ENCODE measurements at regions of chr22 and their contacts with region 1.

Region 1: GRCh38 chr22:24156913-24157821 is 24.1 kb upstream of the SUSD2 start:
- DNase-seq: peak; percentile 84
- ATAC-seq: peak; percentile 84
- H3K4me3 Mint-ChIP-seq: peak overlapping the region; percentile 91
- H3K27ac Mint-ChIP-seq: peak overlapping the region; percentile 85
- H3K4me1 Mint-ChIP-seq: peaks cover 64% of the 10 kb centered on the region
- H3K27me3 Mint-ChIP-seq: no peaks in the 10 kb centered on the region
- CTCF ChIP-seq: no peak

Region 2: GRCh38 chr22:23772649-23773495 is 384.3 kb before region 1 on chr22 and contains the start of gene MMP11:
- CTCF ChIA-PET with region 1: no interaction called
- POLR2A ChIA-PET with region 1: no interaction called
- intact Hi-C with region 1: no loop called
- DNase-seq: peak; percentile 60
- ATAC-seq: peak; percentile 55
- H3K4me3 Mint-ChIP-seq: peak within 1 kb of the TSS; percentile 84
- H3K27ac Mint-ChIP-seq: peak within 1 kb of the TSS; percentile 63
- H3K4me1 Mint-ChIP-seq: peaks cover 49% of the 10 kb centered on the region
- H3K27me3 Mint-ChIP-seq: no peaks in the 10 kb centered on the region
- CTCF ChIP-seq: no peak
- total RNA-seq, gene MMP11: 3.6 TPM in 2 replicates

Region 3: DNA sequence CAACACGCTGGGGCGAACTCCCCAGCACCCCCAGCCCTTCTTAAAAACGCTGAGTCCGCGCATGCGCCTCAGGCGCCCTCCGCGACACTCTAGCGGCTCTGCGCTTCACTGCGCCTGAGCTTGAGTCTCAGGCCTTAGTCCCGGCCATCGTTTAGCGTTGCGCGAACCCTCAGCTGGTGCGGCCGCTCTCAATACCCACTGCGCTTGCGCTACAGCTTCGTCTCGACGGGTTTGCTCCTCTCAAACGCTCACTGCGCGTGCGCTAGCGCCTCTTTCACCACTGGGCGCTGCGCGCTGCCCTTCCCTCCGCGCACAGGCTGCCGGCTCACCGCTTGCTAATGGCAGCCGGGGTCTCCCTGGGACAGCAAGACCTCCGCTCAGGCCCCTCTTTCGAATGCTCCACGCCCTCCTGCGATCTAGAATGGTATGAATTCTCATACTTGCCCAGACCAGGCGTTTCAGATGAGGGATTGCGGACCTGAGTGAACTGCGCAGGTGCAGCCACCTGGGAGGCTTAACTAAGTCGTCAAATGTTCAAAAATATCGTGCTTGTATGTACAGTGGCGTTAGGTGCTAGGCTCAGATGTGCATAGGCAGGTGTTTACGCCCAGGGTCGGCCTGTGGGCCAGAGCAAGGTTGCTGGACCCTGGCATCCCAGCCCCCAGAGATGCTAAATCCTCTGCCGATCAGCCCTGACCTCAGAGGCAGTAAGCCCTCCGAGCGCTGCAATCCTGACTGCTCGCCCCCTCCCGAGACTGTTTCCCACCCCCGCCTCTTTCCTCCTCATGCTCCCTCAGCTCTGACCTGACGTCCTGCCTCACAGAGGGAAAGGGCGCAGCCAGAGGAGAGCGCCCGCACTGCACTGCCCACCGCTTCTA is 299.3 kb before region 1 on chr22 and contains the start of gene SLC2A11:
- CTCF ChIA-PET with region 1: interaction called, 8 read pairs
- POLR2A ChIA-PET with region 1: interaction called, 13 read pairs
- intact Hi-C with region 1: no loop called
- DNase-seq: peak; percentile 90
- ATAC-seq: peak; percentile 94
- H3K4me3 Mint-ChIP-seq: peak within 1 kb of the TSS; percentile 91
- H3K27ac Mint-ChIP-seq: peak within 1 kb of the TSS; percentile 94
- H3K4me1 Mint-ChIP-seq: peaks cover 22% of the 10 kb centered on the region
- H3K27me3 Mint-ChIP-seq: no peaks in the 10 kb centered on the region
- CTCF ChIP-seq: no peak
- total RNA-seq, gene SLC2A11: 24.0 and 30.2 TPM in 2 replicates

Region 4: DNA sequence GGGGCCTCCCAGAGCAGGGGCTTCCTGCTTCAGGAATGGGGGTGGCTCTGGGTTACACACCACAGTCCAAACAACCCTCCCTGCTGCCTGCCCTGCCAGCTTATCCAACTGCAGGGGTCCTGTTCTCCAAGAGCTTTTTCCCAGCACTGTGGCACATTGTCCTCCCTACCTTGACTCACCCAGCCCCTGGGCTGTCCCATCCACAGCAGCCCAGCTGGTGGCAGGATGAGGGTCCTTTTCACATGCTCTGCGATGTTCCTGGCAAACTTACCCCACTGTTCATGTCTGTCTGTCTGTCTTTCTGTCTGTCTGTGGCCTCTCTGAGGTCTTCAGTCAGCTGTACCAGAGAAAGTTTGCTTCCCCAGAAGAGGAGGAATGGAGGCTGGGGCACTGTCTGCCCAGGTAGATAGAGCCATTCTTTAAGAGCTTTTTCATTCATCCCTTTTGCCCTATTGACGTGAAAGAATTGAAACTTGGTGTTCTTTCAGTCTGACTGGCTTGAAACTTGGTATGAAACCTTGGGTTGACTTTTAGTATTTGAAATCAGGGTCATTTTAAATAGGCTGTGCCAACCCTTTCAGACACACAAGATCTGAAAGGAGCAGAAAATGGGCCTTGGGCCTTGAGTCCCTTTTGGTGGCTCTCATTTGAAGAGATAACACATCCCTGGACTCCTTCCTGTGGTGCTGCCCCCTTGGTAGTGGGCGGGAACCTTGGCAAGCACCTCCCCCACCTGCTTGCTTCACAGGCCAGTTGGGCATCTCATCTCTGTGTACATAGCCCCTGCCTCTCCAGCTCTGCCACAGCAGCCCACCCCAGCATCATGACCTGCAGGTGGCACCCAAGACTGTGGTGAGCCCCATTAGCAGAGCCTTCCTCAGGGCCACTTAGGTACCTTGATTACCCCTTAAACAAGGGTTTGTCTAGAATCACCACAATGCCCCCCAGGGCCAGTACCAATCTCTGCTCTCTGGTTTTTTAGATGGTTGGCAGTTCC is 50.5 kb before region 1 on chr22:
- CTCF ChIA-PET with region 1: interaction called, 4 read pairs
- POLR2A ChIA-PET with region 1: interaction called, 3 read pairs
- intact Hi-C with region 1: loop called (anchors 2 kb)
- DNase-seq: peak; percentile 23
- ATAC-seq: peak; percentile 78
- H3K4me3 Mint-ChIP-seq: no peak overlapping the region
- H3K27ac Mint-ChIP-seq: no peak overlapping the region
- H3K4me1 Mint-ChIP-seq: no peaks in the 10 kb centered on the region
- H3K27me3 Mint-ChIP-seq: no peaks in the 10 kb centered on the region
- CTCF ChIP-seq: no peak

Region 5: DNA sequence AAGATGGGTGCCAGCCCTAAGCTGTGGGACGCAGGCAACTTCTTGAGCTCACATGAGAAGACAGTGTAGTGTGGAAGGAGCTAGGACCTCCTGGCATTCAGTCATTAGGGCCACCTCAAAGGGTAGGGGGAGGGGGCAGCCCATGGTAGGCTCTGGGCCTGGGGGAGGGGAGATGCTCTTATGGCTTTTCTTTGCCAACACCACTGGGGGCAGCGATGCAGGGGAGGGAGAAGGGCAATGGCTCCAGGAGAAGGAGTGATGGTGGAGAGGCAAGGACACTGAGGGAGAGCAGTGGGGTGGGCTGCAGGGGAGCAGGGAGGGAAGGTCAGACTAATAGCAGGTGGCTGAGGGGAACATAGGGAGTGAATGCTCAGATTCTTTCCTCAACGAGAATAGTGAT is 39.2 kb before region 1 on chr22:
- CTCF ChIA-PET with region 1: no interaction called
- POLR2A ChIA-PET with region 1: no interaction called
- intact Hi-C with region 1: no loop called
- DNase-seq: no peak
- ATAC-seq: no peak
- H3K4me3 Mint-ChIP-seq: no peak overlapping the region
- H3K27ac Mint-ChIP-seq: no peak overlapping the region
- H3K4me1 Mint-ChIP-seq: no peaks in the 10 kb centered on the region
- H3K27me3 Mint-ChIP-seq: no peaks in the 10 kb centered on the region
- CTCF ChIP-seq: no peak

Region 6: GRCh38 chr22:24175160-24175808 is 18.1 kb after region 1 on chr22:
- CTCF ChIA-PET with region 1: interaction called, 40 read pairs
- POLR2A ChIA-PET with region 1: interaction called, 3 read pairs
- intact Hi-C with region 1: loop called (anchors 2 kb)
- DNase-seq: peak; percentile 53
- ATAC-seq: peak; percentile 66
- H3K4me3 Mint-ChIP-seq: no peak overlapping the region
- H3K27ac Mint-ChIP-seq: no peak overlapping the region
- H3K4me1 Mint-ChIP-seq: no peaks in the 10 kb centered on the region
- H3K27me3 Mint-ChIP-seq: no peaks in the 10 kb centered on the region
- CTCF ChIP-seq: peak; percentile 32

Region 7: GRCh38 chr22:24270638-24271408 is 113.7 kb after region 1 on chr22 and contains the start of gene SPECC1L:
- CTCF ChIA-PET with region 1: no interaction called
- POLR2A ChIA-PET with region 1: no interaction called
- intact Hi-C with region 1: loop called (anchors 10 kb)
- DNase-seq: peak; percentile 96
- ATAC-seq: peak; percentile 90
- H3K4me3 Mint-ChIP-seq: peak within 1 kb of the TSS; percentile 90
- H3K27ac Mint-ChIP-seq: peak within 1 kb of the TSS; percentile 82
- H3K4me1 Mint-ChIP-seq: peaks cover 45% of the 10 kb centered on the region
- H3K27me3 Mint-ChIP-seq: no peaks in the 10 kb centered on the region
- CTCF ChIP-seq: no peak
- total RNA-seq, gene SPECC1L: 59.0 and 64.5 TPM in 2 replicates